Activated CD4-positive, alpha-beta T cell treated with anti-CD3 and anti-CD28 coated beads for 36 hours (primary cell): ENCODE measurements at regions of chr13 and their contacts with region 1.

Region 1: DNA sequence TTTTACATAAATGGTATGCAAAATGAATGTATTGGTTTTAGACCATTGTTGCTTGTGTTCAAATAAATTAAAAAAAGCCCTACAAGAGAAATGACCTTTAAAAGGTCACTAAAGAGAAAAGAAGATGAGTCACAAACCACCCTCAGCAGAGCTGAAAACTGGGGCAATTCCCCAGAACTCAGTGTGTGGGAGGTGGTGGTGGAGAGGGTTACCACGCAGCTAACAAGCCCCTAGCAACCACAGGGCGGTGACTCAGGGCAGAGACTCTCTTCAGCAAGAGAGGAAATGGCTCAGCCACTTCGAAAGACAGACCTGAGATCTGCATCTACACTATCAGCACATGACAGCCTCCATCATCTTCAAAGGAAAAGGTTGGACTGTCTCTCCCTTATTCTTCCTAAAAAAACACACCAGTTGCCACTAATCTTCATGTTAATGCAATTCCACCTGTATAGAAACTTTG is 29.4 kb upstream of the NDFIP2 start:
- DNase-seq: peak; percentile 97
- ATAC-seq: peak; percentile 97
- H3K4me3 Mint-ChIP-seq: peak overlapping the region; percentile 75
- H3K27ac Mint-ChIP-seq: peak overlapping the region; percentile 99
- H3K4me1 Mint-ChIP-seq: peaks cover 81% of the 10 kb centered on the region
- H3K27me3 Mint-ChIP-seq: no peaks in the 10 kb centered on the region

Region 2: DNA sequence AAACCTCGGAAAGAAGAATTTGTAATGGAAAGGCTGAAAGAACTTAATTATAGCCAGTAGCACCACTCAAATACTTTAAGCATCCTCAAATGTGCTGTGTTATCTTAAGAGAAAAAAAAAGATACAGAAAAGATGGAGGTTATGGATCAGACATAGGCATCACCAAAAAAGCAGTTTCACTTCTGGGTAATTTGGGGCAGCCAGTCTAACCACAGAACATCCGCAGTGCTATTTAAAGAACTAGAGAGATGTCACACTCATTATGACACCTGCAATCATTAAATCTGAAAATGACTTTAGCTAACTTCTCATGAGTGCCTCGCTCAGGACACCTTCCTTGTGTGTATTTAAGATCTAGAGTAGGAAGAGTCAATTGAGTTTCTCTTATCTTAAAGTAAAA is 257.3 kb before region 1 on chr13:
- CTCF ChIA-PET with region 1: no interaction called
- POLR2A ChIA-PET with region 1: no interaction called
- intact Hi-C with region 1: loop called in 1 of 2 experiments (anchors 10 kb)
- DNase-seq: peak; percentile 75
- ATAC-seq: peak; percentile 92
- H3K4me3 Mint-ChIP-seq: no peak overlapping the region
- H3K27ac Mint-ChIP-seq: peak overlapping the region; percentile 45
- H3K4me1 Mint-ChIP-seq: peaks cover 39% of the 10 kb centered on the region
- H3K27me3 Mint-ChIP-seq: peaks cover 2% of the 10 kb centered on the region

Region 3: DNA sequence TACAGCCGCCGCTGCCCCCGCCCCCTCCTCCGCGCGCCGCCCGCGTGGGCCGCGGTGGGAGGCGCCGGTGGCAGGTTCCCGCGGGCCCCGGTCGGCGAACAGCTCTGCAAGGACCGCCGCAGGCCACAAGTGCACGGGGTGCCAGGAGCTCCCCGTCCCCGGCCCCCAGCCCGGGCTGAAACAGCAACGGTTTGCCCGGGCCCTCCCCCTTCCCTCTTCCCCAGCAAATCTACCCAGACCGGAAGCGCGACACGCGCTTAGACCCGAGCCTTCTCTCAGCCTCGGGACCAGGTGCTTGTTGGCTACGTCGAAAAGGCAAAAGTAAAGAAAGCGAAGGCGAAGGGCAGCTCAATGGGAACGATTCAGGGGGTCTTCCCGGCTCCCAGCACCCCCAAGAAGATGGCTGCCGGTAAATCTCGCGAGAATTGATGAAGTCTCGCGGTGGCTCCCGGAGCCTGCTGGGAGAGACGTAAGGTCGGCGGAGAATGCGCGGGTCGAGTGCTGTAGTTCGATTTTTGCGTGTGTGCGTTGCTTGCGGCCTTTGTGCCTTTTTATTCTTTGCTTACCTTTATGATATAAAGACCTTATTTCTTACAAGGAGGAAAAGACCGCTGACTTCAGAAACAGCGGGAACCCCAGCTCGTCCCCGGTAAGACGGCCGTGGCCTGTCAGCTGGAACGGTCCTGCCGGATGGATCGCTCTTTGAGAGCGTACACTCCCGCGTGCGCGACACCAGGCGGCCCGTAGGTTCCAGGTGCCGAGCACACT is 45.5 kb before region 1 on chr13 and contains the start of gene RBM26:
- CTCF ChIA-PET with region 1: no interaction called
- POLR2A ChIA-PET with region 1: interaction called, 3 read pairs
- intact Hi-C with region 1: loop called (anchors 2 to 5 kb)
- DNase-seq: peak; percentile 97
- ATAC-seq: peak; percentile 87
- H3K4me3 Mint-ChIP-seq: no peak within 1 kb of the TSS
- H3K27ac Mint-ChIP-seq: peak within 1 kb of the TSS; percentile 98
- H3K4me1 Mint-ChIP-seq: peaks cover 44% of the 10 kb centered on the region
- H3K27me3 Mint-ChIP-seq: no peaks in the 10 kb centered on the region
- total RNA-seq, gene RBM26: 61.3 to 79.6 TPM

Region 4: GRCh38 chr13:79522583-79522982 is 71.1 kb after region 1 on chr13:
- CTCF ChIA-PET with region 1: no interaction called
- POLR2A ChIA-PET with region 1: no interaction called
- intact Hi-C with region 1: loop called (anchors 2 kb)
- DNase-seq: peak; percentile 48
- ATAC-seq: peak; percentile 91
- H3K4me3 Mint-ChIP-seq: peak overlapping the region; percentile 26
- H3K27ac Mint-ChIP-seq: peak overlapping the region; percentile 91
- H3K4me1 Mint-ChIP-seq: peaks cover 26% of the 10 kb centered on the region
- H3K27me3 Mint-ChIP-seq: no peaks in the 10 kb centered on the region